AG04449 (cell line): ENCODE measurements at regions of chr19 and their contacts with region 1.

Region 1: GRCh38 chr19:2408247-2408646 is 19.1 kb downstream of the TIMM13 start:
- DNase-seq: no peak
- H3K4me3 ChIP-seq: no peak overlapping the region
- CTCF ChIP-seq: no peak

Region 2: GRCh38 chr19:2391118-2391725 is 17.0 kb before region 1 on chr19:
- CTCF ChIA-PET with region 1: interaction called, 12 read pairs
- POLR2A ChIA-PET with region 1: no interaction called
- DNase-seq: peak; percentile 19
- H3K4me3 ChIP-seq: no peak overlapping the region
- CTCF ChIP-seq: peak; percentile 69

Region 3: DNA sequence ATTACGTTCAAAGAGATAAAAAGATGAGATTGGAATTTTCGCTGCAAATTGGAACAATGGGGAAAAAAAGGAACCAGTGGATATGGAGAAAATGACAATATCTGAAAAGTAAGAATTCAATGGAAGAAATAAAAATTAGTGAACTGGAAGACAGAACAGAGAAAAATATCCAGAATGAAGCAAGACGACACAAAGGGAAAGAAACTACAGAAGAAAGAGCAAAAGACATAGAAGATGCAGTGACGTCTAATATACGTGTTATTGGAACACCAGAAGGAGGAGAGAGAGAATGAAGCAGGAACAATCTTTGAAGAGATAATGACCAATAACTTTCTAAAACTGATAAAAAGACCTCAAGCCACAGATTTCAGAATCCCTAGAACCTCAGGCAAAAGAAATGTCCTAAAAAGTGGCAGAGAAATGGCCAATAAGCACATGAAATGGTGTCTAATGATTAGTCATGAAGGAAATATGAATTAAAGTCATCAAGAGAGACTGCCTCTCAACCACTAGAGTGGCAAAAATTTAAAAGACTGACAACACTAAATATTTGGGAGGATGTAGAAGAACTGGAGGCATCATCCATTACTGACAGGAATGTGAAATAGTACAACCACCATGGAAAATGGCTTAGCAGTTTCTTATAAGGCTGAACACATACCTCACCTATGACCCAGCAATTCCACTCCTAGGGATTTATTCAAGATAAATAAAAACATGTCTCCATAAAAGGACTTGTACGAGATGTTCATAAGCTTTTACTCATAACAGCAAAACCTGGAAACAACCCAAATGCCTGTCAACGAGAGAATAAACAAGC is 124.2 kb after region 1 on chr19:
- CTCF ChIA-PET with region 1: no interaction called
- POLR2A ChIA-PET with region 1: no interaction called
- DNase-seq: peak; percentile 80
- H3K4me3 ChIP-seq: no peak overlapping the region
- CTCF ChIP-seq: no peak